ENCODE measurements at regions of chr10 and their contacts with region 1.

Region 1: DNA sequence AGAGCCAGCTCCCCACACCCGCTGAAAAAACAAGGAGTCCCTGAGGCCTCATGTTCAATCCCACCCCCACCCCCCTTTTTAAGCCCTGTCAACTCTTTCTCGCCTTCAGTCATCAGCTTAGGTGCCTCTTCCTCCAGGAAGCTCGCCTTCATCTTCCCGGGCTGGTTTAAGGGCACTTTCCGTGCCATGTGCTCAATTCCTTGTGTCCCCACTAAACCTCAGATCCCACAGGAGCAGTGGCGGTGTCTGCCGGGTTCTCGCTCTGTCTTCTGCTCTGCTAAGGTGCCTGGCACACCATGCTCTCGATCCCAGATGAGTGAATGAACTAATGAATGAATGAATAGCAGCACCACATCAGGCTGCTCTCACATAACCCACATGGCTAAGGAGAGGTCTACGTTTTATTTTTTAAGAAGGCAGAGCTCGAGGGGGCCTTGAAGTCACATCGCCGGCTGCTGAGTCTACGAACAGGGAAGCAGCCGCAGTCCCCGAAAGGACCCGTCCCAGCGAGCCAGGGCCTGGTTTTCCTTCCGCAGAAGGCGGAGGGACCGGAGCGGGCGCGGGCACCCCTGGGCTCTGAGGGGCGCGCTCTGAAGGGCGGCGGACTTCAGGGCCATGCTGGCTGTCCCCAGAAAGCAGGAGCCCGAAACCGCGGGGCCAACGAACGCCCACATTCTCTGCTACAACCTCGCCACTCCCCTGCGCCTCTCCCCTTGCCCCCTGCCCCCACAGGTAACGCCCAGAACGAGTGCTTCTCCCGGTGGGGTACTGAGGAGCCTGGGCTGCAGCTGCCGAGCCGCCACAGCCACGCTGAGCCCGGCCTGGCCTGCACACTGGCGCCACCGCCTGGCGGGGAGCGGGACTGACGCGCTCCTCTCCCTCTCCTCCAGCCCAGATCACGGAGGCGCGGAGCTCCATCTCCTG is 73.4 kb upstream of the KCNMA1 start:
- DNase-seq: peak; percentile 57
- H3K4me3 Mint-ChIP-seq: peak overlapping the region; percentile 33
- H3K27ac Mint-ChIP-seq: no peak overlapping the region
- H3K4me1 Mint-ChIP-seq: no peaks in the 10 kb centered on the region
- H3K27me3 Mint-ChIP-seq: no peaks in the 10 kb centered on the region
- CTCF ChIP-seq: peak; percentile 94

Region 2: DNA sequence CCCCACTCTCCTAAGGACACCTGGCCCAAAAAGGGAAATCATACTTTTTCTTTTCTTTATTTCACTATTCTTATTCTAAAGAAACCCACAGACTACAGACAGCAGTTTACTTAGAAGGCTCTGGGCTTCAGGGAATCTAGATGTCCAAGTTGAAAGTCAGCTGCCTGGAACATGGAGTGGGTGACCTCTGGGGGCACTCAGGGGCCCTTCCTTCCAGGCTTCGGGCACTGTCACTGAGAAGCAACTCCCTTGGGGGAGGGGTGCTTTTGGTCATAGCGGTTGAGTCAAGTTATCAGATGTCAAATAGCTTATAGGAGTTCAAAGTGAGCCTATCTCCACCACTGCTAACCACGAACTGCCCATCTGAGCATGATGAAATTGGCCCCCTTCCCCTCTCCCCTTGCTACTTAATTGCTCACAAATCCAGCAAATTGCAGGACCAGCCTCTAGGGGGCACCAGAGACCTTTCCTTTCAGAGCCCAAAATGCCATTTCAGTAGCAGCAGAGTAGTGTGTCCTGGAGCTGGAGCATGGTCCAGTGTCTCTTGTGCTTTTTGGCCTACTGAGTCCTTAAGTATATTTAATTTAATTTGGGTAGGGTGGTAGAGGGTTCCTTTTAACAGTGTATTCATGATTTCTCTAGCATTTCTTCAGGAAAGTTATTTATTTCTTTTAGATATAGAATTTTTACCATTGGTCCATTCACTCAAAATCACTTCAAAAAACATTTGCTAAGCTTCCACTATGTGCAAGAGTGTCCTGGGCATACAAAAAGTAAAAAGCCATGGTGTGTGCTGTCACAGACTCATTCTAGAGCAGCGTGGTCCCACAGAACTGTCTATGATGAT is 537.2 kb before region 1 on chr10:
- CTCF ChIA-PET with region 1: interaction called, 193 read pairs
- POLR2A ChIA-PET with region 1: no interaction called
- intact Hi-C with region 1: loop called (anchors 1 kb)
- DNase-seq: peak; percentile 77
- H3K4me3 Mint-ChIP-seq: no peak overlapping the region
- H3K27ac Mint-ChIP-seq: no peak overlapping the region
- H3K4me1 Mint-ChIP-seq: peaks cover 5% of the 10 kb centered on the region
- H3K27me3 Mint-ChIP-seq: no peaks in the 10 kb centered on the region
- CTCF ChIP-seq: peak; percentile 89

Region 3: DNA sequence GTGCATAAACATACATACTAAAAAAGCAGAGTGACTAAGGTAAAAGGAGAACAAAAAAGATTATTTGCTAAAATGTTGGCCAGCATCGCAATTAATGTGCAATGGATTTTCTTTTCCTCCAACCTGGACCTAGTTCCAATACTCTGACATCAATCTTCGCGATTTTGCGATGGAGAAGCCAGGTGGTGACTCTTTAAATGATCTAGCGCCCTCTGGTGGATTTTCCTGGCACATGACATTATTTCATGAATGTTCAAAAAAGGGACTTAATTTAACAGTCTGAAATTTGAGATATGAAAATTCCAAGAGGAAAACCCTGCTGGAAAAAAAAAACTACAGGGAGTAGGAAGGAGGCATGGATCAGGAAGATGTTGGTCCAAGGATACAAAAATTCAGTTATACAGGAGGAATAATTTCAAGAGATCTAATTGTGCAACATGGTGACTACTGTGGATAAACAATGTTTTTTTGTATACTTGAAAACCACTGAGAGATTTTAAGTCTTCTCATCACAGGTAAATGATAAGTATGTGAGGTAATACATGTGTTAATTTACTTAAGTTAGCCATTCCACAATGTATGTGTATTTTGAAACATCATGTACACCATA is 69.1 kb before region 1 on chr10:
- CTCF ChIA-PET with region 1: interaction called, 26 read pairs
- POLR2A ChIA-PET with region 1: no interaction called
- intact Hi-C with region 1: loop called (anchors 1 kb)
- DNase-seq: peak; percentile 82
- H3K4me3 Mint-ChIP-seq: no peak overlapping the region
- H3K27ac Mint-ChIP-seq: no peak overlapping the region
- H3K4me1 Mint-ChIP-seq: peaks cover 7% of the 10 kb centered on the region
- H3K27me3 Mint-ChIP-seq: no peaks in the 10 kb centered on the region
- CTCF ChIP-seq: peak; percentile 66

Region 4: GRCh38 chr10:77692782-77693181 is 18.2 kb before region 1 on chr10:
- CTCF ChIA-PET with region 1: interaction called, 28 read pairs
- POLR2A ChIA-PET with region 1: interaction called, 3 read pairs
- intact Hi-C with region 1: no loop called
- DNase-seq: peak; percentile 48
- H3K4me3 Mint-ChIP-seq: no peak overlapping the region
- H3K27ac Mint-ChIP-seq: no peak overlapping the region
- H3K4me1 Mint-ChIP-seq: peaks cover 5% of the 10 kb centered on the region
- H3K27me3 Mint-ChIP-seq: no peaks in the 10 kb centered on the region
- CTCF ChIP-seq: no peak

Region 5: GRCh38 chr10:77721815-77722214 is 10.8 kb after region 1 on chr10:
- CTCF ChIA-PET with region 1: interaction called, 37 read pairs
- POLR2A ChIA-PET with region 1: interaction called, 4 read pairs
- intact Hi-C with region 1: no loop called
- DNase-seq: no peak
- H3K4me3 Mint-ChIP-seq: no peak overlapping the region
- H3K27ac Mint-ChIP-seq: no peak overlapping the region
- H3K4me1 Mint-ChIP-seq: peaks cover 26% of the 10 kb centered on the region
- H3K27me3 Mint-ChIP-seq: no peaks in the 10 kb centered on the region
- CTCF ChIP-seq: no peak

Region 6: GRCh38 chr10:77756319-77757232 is 45.6 kb after region 1 on chr10:
- CTCF ChIA-PET with region 1: interaction called, 27 read pairs
- POLR2A ChIA-PET with region 1: no interaction called
- intact Hi-C with region 1: loop called (anchors 1 kb)
- DNase-seq: peak; percentile 80
- H3K4me3 Mint-ChIP-seq: no peak overlapping the region
- H3K27ac Mint-ChIP-seq: no peak overlapping the region
- H3K4me1 Mint-ChIP-seq: peaks cover 38% of the 10 kb centered on the region
- H3K27me3 Mint-ChIP-seq: no peaks in the 10 kb centered on the region
- CTCF ChIP-seq: peak; percentile 81

Region 7: GRCh38 chr10:78290131-78290750 is 579.2 kb after region 1 on chr10:
- CTCF ChIA-PET with region 1: no interaction called
- POLR2A ChIA-PET with region 1: no interaction called
- intact Hi-C with region 1: no loop called
- DNase-seq: peak; percentile 7
- H3K4me3 Mint-ChIP-seq: no peak overlapping the region
- H3K27ac Mint-ChIP-seq: no peak overlapping the region
- H3K4me1 Mint-ChIP-seq: no peaks in the 10 kb centered on the region
- H3K27me3 Mint-ChIP-seq: peaks cover 36% of the 10 kb centered on the region
- CTCF ChIP-seq: no peak

Measured in MCF 10A (cell line).